Activated CD4-positive, alpha-beta memory T cell treated with anti-CD3 and anti-CD28 coated beads for 36 hours (primary cell): ENCODE measurements at regions of chr22 and their contacts with region 1.

Region 1: DNA sequence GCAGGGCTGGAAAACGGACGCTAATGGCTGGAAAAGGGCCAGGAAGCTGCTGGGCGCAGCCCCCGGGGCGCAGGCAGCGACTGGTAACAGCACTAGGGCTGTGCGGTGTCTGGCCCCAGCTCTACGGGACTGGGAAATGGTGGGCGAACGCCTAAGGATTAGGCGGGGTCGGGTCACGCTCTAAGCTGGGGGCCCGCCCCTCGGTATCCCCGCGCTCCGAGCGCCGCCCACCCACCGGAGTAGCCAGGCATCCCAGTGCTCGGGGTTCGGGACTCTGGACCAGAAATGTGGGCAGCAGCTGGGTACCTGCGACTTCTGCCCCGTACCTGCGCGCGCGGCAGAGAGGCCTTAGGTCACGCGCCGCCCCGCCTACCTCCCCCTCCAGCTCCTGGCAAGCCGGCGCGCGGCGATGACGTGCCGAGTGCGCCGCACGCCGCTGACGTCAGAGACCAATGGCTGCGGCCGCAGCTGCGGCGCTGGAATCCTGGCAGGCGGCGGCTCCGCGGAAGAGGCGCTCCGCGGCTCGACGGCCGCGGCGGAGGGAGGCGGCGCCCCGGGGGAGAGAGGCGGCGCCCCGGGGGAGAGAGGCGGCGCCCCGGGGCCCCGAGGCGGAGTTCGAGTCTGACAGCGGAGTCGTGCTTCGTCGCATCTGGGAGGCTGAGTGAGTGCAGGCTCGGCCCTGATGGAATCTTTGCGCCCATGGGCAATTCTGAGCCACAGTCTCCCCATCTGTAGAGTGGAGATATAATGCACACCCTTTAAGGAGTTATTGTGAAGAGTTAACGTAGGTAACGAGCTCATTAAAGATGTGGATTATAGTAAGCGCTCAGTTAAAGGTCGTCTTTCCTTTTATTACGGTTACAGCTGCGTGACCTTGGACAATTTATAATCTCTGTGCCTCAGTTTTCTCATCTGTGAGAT is at the starts of genes HPS4 and SRRD:
- DNase-seq: peak; percentile 94
- H3K4me3 Mint-ChIP-seq: peak within 1 kb of the TSS; percentile 96
- H3K27ac Mint-ChIP-seq: peak within 1 kb of the TSS; percentile 92
- H3K4me1 Mint-ChIP-seq: peaks cover 65% of the 10 kb centered on the region
- H3K27me3 Mint-ChIP-seq: no peaks in the 10 kb centered on the region
- total RNA-seq, gene HPS4: 41.7 to 44.3 TPM
- total RNA-seq, gene SRRD: 20.6 to 22.0 TPM

Region 2: GRCh38 chr22:26364066-26365015 is 119.4 kb before region 1 on chr22:
- CTCF ChIA-PET with region 1: interaction called, 15 read pairs
- POLR2A ChIA-PET with region 1: no interaction called
- intact Hi-C with region 1: no loop called
- DNase-seq: peak; percentile 57
- H3K4me3 Mint-ChIP-seq: no peak overlapping the region
- H3K27ac Mint-ChIP-seq: no peak overlapping the region
- H3K4me1 Mint-ChIP-seq: peaks cover 3% of the 10 kb centered on the region
- H3K27me3 Mint-ChIP-seq: peaks cover 14% of the 10 kb centered on the region

Region 3: GRCh38 chr22:26428515-26429457 is 54.9 kb before region 1 on chr22 and contains the start of gene ASPHD2:
- CTCF ChIA-PET with region 1: interaction called, 18 read pairs
- POLR2A ChIA-PET with region 1: interaction called, 41 read pairs
- intact Hi-C with region 1: loop called (anchors 1 kb)
- DNase-seq: peak; percentile 84
- H3K4me3 Mint-ChIP-seq: peak within 1 kb of the TSS; percentile 92
- H3K27ac Mint-ChIP-seq: peak within 1 kb of the TSS; percentile 96
- H3K4me1 Mint-ChIP-seq: peaks cover 49% of the 10 kb centered on the region
- H3K27me3 Mint-ChIP-seq: no peaks in the 10 kb centered on the region
- total RNA-seq, gene ASPHD2: 9.2 to 10.0 TPM

Region 4: DNA sequence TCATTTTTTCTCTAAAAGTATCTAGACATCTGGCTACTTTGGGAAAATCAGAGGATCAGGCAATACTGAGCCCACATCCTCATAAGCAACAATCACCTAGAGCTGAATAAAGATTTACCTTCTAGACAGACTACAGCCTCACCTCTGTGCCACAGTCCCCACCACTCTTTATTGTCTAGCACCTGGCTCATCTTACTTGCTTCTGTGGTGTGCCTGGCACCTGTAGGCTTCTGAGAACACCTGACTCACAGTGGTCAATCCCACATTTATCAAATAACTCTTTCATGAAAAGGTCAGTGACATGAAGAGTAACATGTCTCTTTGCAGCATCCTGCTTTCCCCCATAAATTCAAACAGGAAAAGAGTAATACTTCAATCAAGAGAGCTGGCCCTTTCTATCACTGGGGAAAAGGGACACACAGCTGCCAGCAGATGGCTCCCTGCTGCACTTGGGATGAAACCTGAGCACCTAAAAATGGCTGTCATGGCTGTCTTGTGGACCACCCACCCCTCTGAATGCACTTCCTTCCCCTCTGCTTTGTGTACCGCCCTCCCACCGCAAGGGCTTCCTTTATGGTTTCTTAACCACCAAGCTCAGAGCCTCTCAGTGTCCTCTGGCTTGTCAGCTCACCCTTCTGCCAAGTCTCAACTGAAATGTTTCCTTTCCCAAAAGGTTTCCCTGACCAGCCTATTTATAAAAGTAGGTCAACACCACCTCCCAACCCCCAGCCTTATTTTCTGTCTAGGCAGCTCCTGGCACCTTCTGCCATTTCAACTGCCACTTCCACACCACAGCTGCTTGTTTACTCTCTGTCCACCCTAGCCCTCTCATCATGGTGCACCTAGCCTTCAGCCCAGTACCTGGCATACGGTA is 19.2 kb after region 1 on chr22:
- CTCF ChIA-PET with region 1: interaction called, 17 read pairs
- POLR2A ChIA-PET with region 1: interaction called, 5 read pairs
- intact Hi-C with region 1: no loop called
- DNase-seq: peak; percentile 75
- H3K4me3 Mint-ChIP-seq: no peak overlapping the region
- H3K27ac Mint-ChIP-seq: peak overlapping the region; percentile 87
- H3K4me1 Mint-ChIP-seq: peaks cover 20% of the 10 kb centered on the region
- H3K27me3 Mint-ChIP-seq: no peaks in the 10 kb centered on the region

Region 5: DNA sequence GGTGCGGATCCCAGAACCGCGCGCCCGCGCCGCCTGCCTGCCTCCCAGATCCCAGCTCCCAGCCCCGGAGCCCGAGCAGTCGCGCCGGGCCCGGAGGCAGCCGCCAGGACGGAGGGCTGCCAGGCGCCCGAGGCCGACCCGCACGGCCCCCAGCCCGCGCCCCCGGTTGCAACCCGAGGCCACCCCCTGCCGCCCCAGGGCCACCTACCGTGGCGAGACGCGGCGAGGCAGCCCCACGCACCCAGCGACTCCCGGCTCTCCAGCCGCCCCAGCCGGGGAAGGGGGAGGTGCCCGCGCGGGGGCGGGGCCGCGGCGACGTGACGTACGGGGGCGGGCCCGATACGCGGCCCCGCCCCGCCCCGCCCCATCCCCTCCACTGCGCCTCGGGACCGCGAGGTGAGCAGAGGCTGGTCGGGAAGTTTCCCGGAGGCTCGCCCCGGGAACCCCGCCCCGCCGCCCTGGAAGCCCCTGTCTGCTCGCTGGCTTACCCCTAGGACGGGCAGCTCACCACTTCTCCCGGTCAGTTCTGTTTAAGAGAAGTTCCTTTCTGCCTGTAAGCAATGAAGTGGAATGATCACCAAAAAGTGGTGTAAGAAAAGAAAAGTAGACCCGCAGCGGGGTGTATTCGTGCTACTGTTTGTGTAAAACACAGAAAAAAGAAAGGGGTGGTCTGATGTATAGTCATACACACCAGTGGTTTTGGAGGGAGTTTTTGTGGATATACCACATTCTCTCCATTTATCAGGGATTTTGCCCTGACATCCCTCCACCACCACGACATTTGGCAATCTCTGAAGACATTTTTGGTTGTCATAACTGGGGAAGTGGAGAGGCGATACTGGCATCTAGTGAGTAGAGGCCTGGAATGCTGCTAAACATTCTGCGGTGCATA is 106.4 kb after region 1 on chr22 and contains the start of gene TPST2:
- CTCF ChIA-PET with region 1: no interaction called
- POLR2A ChIA-PET with region 1: interaction called, 6 read pairs
- intact Hi-C with region 1: loop called (anchors 1 kb)
- DNase-seq: peak; percentile 84
- H3K4me3 Mint-ChIP-seq: peak within 1 kb of the TSS; percentile 86
- H3K27ac Mint-ChIP-seq: peak within 1 kb of the TSS; percentile 88
- H3K4me1 Mint-ChIP-seq: peaks cover 55% of the 10 kb centered on the region
- H3K27me3 Mint-ChIP-seq: no peaks in the 10 kb centered on the region
- total RNA-seq, gene TPST2: 27.9 to 31.2 TPM

Region 6: DNA sequence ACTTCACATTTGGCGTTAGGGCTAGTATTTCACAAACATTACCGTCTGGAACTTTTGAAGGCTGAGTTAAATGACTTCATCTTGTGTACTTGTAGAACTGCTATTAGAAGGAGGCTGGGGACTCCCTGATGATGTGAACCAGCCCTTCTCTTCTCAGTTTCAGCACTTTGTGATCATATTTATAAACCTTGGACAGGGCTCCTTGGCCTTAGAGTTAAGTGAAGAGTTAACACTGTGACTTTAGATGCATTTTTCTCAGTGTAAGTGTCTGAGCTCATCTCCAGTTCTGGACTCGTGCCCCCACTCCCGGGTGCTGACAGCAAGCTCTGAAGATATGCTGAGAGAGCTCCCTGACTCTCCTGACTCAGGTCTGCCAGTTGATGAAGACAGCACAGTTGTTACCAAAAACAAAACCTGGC is 182.1 kb after region 1 on chr22:
- CTCF ChIA-PET with region 1: interaction called, 13 read pairs
- POLR2A ChIA-PET with region 1: interaction called, 9 read pairs
- intact Hi-C with region 1: no loop called
- DNase-seq: no peak
- H3K4me3 Mint-ChIP-seq: peak overlapping the region; percentile 43
- H3K27ac Mint-ChIP-seq: peak overlapping the region; percentile 92
- H3K4me1 Mint-ChIP-seq: peaks cover 62% of the 10 kb centered on the region
- H3K27me3 Mint-ChIP-seq: no peaks in the 10 kb centered on the region